Activated CD4-positive, alpha-beta memory T cell treated with anti-CD3 and anti-CD28 coated beads for 36 hours (primary cell): ENCODE measurements at regions of chr13 and their contacts with region 1.

Region 1: DNA sequence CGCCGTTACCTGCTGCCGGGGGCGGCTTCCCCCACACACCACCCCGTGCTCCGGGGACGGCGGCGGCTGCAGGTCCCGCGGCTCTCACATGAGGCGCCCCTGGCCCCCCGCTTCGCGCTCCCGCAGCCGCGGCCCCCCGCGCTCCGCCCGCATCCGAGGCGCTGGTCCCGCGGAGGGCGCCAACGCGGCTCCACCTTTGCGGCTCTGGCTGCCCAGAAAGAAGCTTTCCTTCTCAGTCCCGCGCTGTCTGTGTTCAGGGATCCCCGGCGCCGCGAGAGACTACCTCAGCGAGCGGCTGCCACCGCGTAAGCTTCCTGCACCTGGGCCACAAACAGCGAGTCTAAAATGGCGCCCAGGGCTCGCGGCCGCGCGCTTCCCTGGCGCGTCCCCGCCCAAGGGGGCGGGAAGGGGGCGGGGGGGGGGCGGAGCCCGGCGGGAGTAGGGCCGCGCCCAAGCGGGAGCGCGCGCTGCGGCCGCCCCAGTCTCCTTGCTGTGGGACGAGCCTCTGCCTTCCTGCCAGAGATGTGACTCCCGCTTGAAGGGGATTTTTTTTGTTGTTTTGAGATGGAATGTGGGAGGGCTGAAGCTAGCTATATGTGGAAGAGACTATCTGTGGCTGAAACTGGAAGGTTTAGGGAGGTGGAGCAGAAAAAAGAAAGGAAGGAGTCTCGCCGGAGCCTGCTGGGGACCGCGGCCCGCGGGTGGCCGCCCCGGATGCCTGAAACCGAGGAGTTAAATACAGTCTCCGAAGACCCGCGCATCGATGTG is at the start of gene FBXL3:
- DNase-seq: peak; percentile 89
- H3K4me3 Mint-ChIP-seq: peak within 1 kb of the TSS; percentile 99
- H3K27ac Mint-ChIP-seq: peak within 1 kb of the TSS; percentile 96
- H3K4me1 Mint-ChIP-seq: peaks cover 41% of the 10 kb centered on the region
- H3K27me3 Mint-ChIP-seq: no peaks in the 10 kb centered on the region
- total RNA-seq, gene FBXL3: 35.6 to 35.7 TPM

Region 2: GRCh38 chr13:76596216-76596615 is 430.8 kb before region 1 on chr13:
- CTCF ChIA-PET with region 1: no interaction called
- POLR2A ChIA-PET with region 1: no interaction called
- intact Hi-C with region 1: no loop called
- DNase-seq: no peak
- H3K4me3 Mint-ChIP-seq: no peak overlapping the region
- H3K27ac Mint-ChIP-seq: no peak overlapping the region
- H3K4me1 Mint-ChIP-seq: no peaks in the 10 kb centered on the region
- H3K27me3 Mint-ChIP-seq: peaks cover 5% of the 10 kb centered on the region

Region 3: DNA sequence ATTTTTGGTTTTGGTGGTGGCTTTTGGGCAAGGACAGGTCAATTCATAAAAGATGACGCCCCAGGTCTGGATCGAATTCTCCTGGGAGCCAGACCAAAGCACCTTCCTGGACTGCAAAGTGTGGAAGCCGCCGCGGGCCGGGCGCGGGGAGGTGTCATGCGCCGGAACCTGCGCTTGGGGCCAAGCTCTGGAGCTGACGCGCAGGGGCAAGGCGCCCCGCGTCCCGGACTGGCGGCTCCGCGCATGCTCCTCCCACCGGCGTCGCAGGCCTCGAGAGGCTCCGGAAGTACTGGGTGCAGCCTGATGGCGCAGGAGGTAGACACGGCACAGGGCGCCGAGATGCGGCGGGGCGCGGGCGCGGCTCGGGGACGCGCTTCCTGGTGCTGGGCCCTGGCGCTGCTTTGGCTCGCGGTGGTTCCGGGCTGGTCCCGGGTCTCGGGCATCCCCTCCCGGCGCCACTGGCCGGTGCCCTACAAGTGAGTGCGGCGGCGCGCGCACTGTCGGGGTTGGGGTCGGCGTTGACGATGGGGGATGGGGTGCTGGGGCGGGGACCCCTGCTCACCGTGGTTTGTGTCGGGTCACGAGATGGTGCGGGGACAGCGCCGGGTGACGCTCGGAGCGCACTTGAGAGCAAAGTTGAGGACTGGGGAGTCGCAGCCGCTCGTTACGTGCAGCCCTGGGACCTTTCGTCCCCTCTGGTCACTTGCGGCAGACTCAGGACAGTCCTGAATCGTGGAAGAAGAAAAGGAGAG is 35.0 kb before region 1 on chr13 and contains the start of gene CLN5:
- CTCF ChIA-PET with region 1: interaction called, 5 read pairs
- POLR2A ChIA-PET with region 1: interaction called, 54 read pairs
- intact Hi-C with region 1: loop called (anchors 1 kb)
- DNase-seq: peak; percentile 97
- H3K4me3 Mint-ChIP-seq: peak within 1 kb of the TSS; percentile 94
- H3K27ac Mint-ChIP-seq: peak within 1 kb of the TSS; percentile 99
- H3K4me1 Mint-ChIP-seq: peaks cover 41% of the 10 kb centered on the region
- H3K27me3 Mint-ChIP-seq: peaks cover 1% of the 10 kb centered on the region
- total RNA-seq, gene CLN5: 12.4 to 14.0 TPM

Region 4: GRCh38 chr13:77184455-77184854 is 157.5 kb after region 1 on chr13:
- CTCF ChIA-PET with region 1: no interaction called
- POLR2A ChIA-PET with region 1: no interaction called
- intact Hi-C with region 1: loop called (anchors 2 kb)
- DNase-seq: peak; percentile 77
- H3K4me3 Mint-ChIP-seq: no peak overlapping the region
- H3K27ac Mint-ChIP-seq: peak overlapping the region; percentile 40
- H3K4me1 Mint-ChIP-seq: peaks cover 22% of the 10 kb centered on the region
- H3K27me3 Mint-ChIP-seq: no peaks in the 10 kb centered on the region

Region 5: GRCh38 chr13:77345150-77345780 is 318.3 kb after region 1 on chr13:
- CTCF ChIA-PET with region 1: no interaction called
- POLR2A ChIA-PET with region 1: no interaction called
- intact Hi-C with region 1: loop called (anchors 1 kb)
- DNase-seq: peak; percentile 53
- H3K4me3 Mint-ChIP-seq: peak overlapping the region; percentile 51
- H3K27ac Mint-ChIP-seq: peak overlapping the region; percentile 90
- H3K4me1 Mint-ChIP-seq: peaks cover 24% of the 10 kb centered on the region
- H3K27me3 Mint-ChIP-seq: no peaks in the 10 kb centered on the region

Region 6: DNA sequence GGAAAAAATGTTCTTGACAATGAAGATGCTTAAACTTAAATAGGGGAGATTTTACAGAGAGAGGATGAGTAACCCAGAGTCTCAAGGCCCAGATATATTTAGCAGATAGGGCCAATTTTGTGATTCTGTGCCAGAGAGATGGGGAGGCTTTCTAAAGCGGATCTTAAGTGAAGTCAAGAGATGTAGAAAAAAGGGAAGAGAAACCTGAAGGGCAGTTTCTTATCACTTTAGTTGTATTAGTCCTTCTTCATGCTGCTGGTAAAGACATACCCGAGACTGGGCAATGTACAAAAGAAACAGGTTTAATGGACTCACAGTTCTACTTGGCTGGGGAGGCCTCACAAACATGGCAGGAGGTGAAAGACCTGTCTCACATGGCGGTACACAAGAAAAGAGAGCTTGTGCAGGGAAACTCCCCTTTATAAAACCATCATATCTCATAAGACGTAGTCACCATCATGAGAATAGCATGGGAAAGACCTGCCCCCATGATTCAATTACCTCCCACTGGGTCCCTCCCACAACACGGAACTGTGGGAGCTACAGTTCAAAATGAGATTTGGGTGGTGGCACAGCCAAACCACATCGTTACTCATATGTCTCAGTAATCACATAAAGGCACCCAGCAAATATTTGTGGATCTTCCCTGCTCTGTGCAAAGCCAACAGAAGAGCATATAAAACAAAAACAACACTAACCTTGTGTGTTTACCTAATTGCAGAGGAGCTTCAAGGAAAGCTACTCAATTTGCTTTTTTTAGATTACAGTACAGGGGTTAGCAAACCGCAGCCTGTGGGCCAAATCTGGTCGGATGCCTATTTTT is 402.5 kb after region 1 on chr13:
- CTCF ChIA-PET with region 1: no interaction called
- POLR2A ChIA-PET with region 1: no interaction called
- intact Hi-C with region 1: loop called (anchors 5 kb)
- DNase-seq: peak; percentile 80
- H3K4me3 Mint-ChIP-seq: peak overlapping the region; percentile 7
- H3K27ac Mint-ChIP-seq: peak overlapping the region; percentile 77
- H3K4me1 Mint-ChIP-seq: peaks cover 17% of the 10 kb centered on the region
- H3K27me3 Mint-ChIP-seq: no peaks in the 10 kb centered on the region

Region 7: GRCh38 chr13:77729502-77730221 is 702.7 kb after region 1 on chr13:
- CTCF ChIA-PET with region 1: no interaction called
- POLR2A ChIA-PET with region 1: no interaction called
- intact Hi-C with region 1: loop called (anchors 10 kb)
- DNase-seq: peak; percentile 66
- H3K4me3 Mint-ChIP-seq: peak overlapping the region; percentile 32
- H3K27ac Mint-ChIP-seq: peak overlapping the region; percentile 70
- H3K4me1 Mint-ChIP-seq: peaks cover 39% of the 10 kb centered on the region
- H3K27me3 Mint-ChIP-seq: no peaks in the 10 kb centered on the region